ENCODE measurements at regions of chr7 and their contacts with region 1.

Region 1: DNA sequence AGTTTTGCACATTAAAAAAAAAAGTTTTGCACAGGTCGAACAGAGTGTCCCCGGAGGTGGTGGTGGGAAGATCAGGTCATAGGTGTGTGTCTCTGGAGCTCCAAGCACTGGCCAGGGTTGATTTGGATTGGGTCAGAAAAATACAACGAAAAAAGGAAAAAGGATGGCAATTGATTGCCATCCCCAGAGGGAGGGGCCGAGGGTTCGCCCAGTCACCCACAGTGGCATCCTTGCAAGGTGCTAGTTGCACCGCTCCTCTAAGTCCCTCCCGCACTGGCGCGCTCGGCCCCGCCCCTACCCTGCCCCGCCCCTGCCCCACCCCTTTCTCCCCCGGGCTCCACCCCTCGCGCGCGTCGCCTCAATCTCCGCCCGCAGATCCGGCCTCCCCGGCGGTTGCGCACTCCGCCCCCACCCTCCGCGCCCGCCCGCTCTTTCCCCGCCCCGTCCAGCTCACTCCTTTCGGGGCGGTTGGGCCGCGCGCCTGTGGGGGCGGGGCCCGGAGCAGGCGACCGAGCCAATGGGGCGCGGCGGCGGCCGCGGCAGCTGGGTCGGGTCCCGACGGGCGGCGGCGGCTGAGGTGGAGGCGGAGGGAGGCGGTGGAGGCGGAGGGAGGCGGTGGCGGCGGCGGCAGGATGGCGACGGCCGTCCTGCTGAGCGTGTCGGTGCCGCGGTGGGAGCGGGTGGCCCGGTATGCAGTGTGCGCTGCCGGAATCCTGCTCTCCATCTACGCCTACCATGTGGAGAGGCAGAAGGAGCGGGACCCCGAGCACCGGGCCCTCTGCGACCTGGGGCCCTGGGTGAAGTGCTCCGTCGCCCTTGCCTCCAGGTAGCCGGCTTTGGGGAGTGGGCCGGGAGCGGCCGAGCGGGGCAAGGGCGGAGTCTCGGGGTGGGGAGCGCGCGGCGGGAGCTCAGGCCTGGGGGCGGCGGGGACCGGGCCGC is 31.5 kb upstream of the ERV3-1 start:
- DNase-seq: peak; percentile 42
- ATAC-seq: peak; percentile 96
- H3K4me3 ChIP-seq: peak overlapping the region; percentile 61 to 70
- H3K27ac ChIP-seq: no peak overlapping the region
- H3K4me1 ChIP-seq: peaks cover 8% of the 10 kb centered on the region; the same call in 1 of the 2 replicates
- H3K27me3 ChIP-seq: no peaks in the 10 kb centered on the region
- CTCF ChIP-seq: no peak

Region 2: DNA sequence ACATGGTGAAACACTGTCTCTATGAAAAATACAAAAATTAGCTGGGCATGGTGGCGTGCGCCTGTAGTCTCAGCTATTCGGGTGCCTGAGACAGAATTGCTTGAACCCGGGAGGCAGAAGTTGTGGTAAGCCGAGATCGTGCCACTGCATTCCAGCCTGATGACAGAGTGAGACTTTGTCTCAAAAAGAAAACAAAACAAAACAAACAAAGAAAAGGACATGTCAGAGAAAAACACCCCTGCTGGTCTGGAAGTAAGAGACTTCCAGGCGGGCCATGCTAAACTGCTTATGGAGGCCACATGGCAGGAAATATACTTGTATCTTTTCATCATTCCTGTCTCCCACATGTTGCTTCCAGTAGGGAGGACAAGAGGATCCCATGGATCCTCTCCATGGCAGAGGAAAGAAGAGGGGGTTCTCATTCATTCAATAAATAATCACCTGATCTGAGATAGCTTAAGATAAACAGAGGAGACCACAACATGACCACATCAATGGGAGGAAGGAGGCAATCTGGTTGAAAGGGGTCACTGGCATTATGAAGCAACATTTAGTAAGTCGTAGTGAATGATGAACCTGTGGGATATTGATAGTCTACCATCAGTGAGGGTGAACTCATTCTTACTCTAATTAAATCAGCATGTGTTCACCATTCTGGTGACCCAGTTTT is 304.3 kb before region 1 on chr7:
- CTCF ChIA-PET with region 1: no interaction called
- POLR2A ChIA-PET with region 1: no interaction called
- in situ Hi-C with region 1: no loop called
- intact Hi-C with region 1: no loop called
- DNase-seq: no peak
- ATAC-seq: 0 out of 2 replicates have a peak, but pooled peaks have one; percentile 53
- H3K4me3 ChIP-seq: no peak overlapping the region
- H3K27ac ChIP-seq: no peak overlapping the region
- H3K4me1 ChIP-seq: no peaks in the 10 kb centered on the region; the same call in 1 of the 2 replicates
- H3K27me3 ChIP-seq: no peaks in the 10 kb centered on the region
- CTCF ChIP-seq: no peak

Region 3: GRCh38 chr7:64934478-64934877 is 103.5 kb before region 1 on chr7:
- CTCF ChIA-PET with region 1: no interaction called
- POLR2A ChIA-PET with region 1: no interaction called
- in situ Hi-C with region 1: no loop called
- intact Hi-C with region 1: no loop called
- DNase-seq: no peak
- ATAC-seq: no peak
- H3K4me3 ChIP-seq: no peak overlapping the region
- H3K27ac ChIP-seq: no peak overlapping the region
- H3K4me1 ChIP-seq: no peaks in the 10 kb centered on the region
- H3K27me3 ChIP-seq: no peaks in the 10 kb centered on the region
- CTCF ChIP-seq: no peak

Region 4: DNA sequence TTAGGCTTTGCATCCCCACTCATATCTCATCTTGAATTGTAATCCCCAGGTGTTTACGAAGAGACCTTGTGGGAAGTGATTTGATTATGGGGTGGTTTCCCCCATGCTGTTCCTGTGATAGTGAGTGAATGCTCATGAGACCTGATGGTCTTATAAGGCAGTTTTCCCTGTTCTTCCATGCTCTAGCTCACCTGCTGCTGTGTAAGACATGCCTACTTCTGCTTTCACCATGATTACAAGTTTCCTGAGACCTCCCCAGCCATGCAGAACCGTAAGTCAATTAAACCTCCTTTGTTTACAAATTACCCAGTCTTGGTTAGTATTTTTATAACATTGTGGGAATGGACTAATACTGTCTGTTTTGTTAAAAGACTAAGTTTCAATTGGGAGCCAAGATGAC is 300.3 kb after region 1 on chr7:
- CTCF ChIA-PET with region 1: no interaction called
- POLR2A ChIA-PET with region 1: no interaction called
- in situ Hi-C with region 1: no loop called
- intact Hi-C with region 1: no loop called
- DNase-seq: no peak
- ATAC-seq: no peak
- H3K4me3 ChIP-seq: no peak overlapping the region
- H3K27ac ChIP-seq: no peak overlapping the region
- H3K4me1 ChIP-seq: no peaks in the 10 kb centered on the region
- H3K27me3 ChIP-seq: no peaks in the 10 kb centered on the region
- CTCF ChIP-seq: no peak

Region 5: DNA sequence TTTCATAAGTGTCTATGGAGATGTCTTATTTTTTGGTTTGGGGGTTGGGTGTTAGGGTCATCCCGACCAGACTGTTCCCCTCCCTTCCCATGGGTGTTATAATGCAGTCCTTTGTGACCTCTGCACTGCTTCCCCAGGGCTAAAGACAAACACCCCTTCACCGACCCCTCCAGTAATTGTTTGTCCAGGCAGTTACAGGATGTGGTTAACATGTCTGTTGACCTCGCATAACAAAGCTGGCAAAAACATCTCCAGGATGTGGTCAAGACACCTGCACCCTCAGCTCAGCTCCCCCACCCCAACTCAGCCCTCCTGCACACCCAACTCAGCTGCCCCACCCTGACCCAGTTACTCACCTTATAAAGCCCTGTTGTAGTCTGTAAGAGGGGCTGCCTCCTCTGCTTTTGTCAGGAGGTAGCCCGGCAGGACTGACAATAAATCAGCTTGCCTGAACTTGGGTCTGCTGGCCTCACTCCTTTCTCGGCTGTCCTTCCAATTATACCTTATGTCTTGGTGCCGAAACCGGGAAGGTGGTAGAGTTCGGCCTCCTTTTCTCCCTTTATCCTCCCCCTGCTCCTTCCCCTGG is 437.8 kb after region 1 on chr7:
- CTCF ChIA-PET with region 1: no interaction called
- POLR2A ChIA-PET with region 1: interaction called, 10 read pairs
- in situ Hi-C with region 1: no loop called
- intact Hi-C with region 1: no loop called
- DNase-seq: no peak
- ATAC-seq: no peak
- H3K4me3 ChIP-seq: no peak overlapping the region
- H3K27ac ChIP-seq: no peak overlapping the region
- H3K4me1 ChIP-seq: no peaks in the 10 kb centered on the region; the same call in 1 of the 2 replicates
- H3K27me3 ChIP-seq: no peaks in the 10 kb centered on the region
- CTCF ChIP-seq: no peak

Region 6: DNA sequence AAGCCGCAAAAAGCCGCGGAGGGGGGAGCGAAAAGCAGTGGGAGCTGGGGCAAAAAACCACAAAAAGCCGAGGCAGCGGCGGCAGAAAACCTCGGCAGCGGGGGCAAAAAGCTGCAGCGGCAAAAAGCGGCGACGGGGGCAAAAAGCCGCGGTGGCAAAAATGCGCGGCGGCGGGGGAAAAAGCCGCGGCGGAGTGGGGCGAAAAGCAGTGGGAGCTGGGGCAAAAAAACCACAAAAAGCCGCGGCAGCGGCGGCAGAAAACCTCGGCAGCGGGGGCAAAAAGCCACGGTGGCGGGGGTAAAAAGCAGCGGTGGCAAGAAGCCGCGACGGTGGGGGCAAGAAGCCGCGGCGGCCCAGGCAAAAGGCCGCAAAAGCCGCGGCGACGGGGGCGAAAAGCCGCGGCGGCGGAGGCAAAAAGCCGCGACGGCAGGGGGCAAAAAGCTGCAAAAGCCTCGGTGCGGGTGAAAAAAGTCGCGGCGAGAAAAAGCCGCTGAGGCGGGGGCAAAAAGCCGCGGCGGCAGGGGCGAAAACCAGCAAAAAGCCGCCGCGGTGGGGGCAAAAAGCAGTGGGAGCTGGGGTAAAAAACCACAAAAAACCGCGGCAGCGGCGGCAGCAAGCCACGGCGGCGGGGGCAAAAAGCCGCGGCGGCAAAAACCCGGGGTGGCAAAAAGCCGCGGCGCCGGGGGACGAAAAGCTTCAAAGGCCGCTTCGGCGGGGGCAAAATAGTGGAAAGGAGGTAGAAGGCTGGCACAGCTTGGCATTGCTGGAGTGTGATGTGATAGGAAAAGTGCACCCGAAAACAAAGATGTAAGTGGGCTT is 471.6 kb after region 1 on chr7:
- CTCF ChIA-PET with region 1: interaction called, 10 read pairs
- POLR2A ChIA-PET with region 1: no interaction called
- in situ Hi-C with region 1: no loop called
- intact Hi-C with region 1: no loop called
- DNase-seq: no peak
- ATAC-seq: no peak
- H3K4me3 ChIP-seq: peak overlapping the region; percentile 50 to 63
- H3K27ac ChIP-seq: no peak overlapping the region
- H3K4me1 ChIP-seq: no peaks in the 10 kb centered on the region
- H3K27me3 ChIP-seq: peaks cover 16% of the 10 kb centered on the region
- CTCF ChIP-seq: no peak

Measured in Panc1 (cell line).